ENCODE measurements at regions of chr5 and their contacts with region 1.

Region 1: DNA sequence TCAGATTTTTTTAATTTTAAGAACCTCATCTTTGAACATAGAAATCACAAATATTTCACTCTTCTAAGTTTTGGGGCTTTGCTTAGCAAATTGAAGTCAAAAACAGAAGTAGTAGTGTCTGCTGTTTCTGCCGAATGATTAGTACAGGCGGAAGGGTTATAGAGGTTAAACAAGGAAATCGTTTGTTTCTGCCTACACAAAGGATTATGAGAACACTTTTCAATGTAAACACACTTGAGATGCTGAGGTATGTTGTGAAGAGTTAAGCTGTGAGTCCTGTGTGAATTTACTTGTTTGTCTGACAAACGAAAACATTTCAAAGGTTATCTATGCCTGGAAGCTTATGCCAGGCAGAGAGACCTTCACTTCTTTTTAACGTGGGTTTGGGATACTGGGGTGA is 224.8 kb downstream of the CETN3 start:
- DNase-seq: no peak
- ATAC-seq: no peak
- H3K4me3 ChIP-seq: no peak overlapping the region
- H3K27ac ChIP-seq: no peak overlapping the region
- H3K4me1 ChIP-seq: peaks cover 0 to 8% (median 0%) of the 10 kb centered on the region in 9 donors
- H3K27me3 ChIP-seq: no peaks in the 10 kb centered on the region
- CTCF ChIP-seq: no peak

Region 2: DNA sequence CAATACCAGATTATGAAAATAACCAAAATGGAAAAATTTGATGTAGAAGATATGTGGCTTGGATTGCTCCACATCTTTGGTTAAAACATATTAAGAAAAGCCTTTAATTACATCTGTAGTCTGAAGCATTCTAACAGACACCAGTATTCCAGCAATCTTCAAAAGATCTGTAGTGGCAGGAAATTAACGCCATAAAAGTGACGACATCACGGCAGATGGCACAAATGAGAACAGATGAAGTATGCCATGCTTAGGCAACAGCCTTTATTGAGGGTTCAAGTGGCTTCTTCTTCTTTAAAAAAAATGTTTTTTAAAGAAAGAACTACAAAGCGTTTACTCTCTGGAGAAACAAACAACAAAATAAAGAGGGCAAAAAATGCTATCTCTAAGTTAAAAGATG is 1466.0 kb before region 1 on chr5:
- intact Hi-C with region 1: loop called in 3 of 10 experiments (anchors 10 kb)
- DNase-seq: no peak
- ATAC-seq: no peak
- H3K4me3 ChIP-seq: no peak overlapping the region
- H3K27ac ChIP-seq: no peak overlapping the region
- H3K4me1 ChIP-seq: peaks cover 0 to 4% (median 0%) of the 10 kb centered on the region in 9 donors
- H3K27me3 ChIP-seq: no peaks in the 10 kb centered on the region
- CTCF ChIP-seq: no peak

Region 3: DNA sequence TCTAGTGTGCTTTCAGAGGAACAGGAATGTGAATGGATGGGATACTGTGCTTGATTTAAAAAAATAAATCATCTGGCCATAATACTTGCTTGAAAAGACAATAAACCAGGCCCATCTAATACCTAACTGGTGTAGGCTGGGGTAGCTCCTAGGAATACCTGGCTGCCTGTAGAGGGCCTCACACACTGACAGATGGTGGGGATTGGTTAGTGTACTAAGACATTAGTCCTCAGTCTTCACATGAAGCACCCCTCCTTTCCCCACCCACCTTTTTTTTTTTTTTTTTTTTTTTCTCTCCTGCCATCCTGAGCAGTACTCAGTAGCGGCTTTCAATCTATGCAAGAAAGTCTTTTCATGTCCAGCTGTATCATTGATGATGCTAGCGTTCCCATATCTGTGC is 504.3 kb after region 1 on chr5:
- intact Hi-C with region 1: no loop called
- DNase-seq: no peak
- ATAC-seq: no peak
- H3K4me3 ChIP-seq: no peak overlapping the region
- H3K27ac ChIP-seq: no peak overlapping the region
- H3K4me1 ChIP-seq: no peaks in the 10 kb centered on the region
- H3K27me3 ChIP-seq: no peaks in the 10 kb centered on the region
- CTCF ChIP-seq: no peak

Measured in heart right ventricle (tissue), 16 donors.